ENCODE measurements at regions of chr1 and their contacts with region 1.

Region 1: GRCh38 chr1:231528172-231529029 is at the start of gene TSNAX:
- DNase-seq: peak; percentile 95
- ATAC-seq: peak; percentile 100
- total RNA-seq, gene TSNAX: 22.8 TPM

Region 2: DNA sequence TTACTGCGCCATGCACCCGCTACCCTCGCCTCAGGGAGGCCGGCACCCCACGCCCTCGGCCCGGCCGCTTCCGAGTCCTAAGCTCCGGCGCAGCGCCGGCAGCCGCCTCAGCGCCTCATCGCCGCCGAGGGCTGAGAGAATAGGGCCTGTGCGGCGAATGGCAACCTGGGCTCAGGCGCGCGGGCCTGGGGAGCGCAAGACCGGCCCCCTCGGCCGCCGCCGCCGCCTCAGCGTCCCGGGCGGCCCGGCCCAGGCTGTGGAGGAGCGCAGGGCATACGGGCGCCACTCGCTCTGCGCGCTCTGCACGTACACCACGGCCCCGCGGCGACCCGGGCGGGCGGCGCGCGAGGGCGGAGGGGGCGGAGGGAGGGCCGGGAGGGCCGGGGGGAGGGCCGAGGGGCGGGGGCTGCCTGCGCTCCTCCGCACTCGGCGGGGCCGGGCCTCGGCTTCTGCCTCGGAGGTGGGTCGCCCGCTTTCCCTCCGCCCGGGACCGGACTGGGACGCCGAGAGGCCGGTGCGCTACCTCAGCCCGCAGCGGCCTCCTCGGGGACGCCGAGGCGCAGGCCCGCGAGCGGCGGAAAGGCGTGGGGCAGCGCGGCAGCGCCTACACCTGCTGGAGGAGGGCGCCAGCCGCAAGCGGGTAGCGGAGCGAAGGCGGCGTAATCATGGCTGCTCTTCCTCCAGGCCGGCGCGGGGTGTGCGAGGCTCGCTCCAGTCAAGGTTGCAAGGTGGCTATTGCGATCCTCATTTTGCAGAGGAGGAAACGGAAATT is 106.2 kb before region 1 on chr1 and contains the start of gene EGLN1:
- intact Hi-C with region 1: loop called (anchors 2 kb)
- DNase-seq: peak; percentile 91
- ATAC-seq: peak; percentile 91
- total RNA-seq, gene EGLN1: 75.2 TPM

Measured in Right ventricle myocardium superior (tissue), 1 donor.